ENCODE measurements at regions of chr11 and their contacts with region 1.

Region 1: GRCh38 chr11:2532704-2533586 is 88.1 kb downstream of the KCNQ1 start:
- DNase-seq: peak; percentile 97
- ATAC-seq: peak; percentile 84
- H3K4me3 Mint-ChIP-seq: peak overlapping the region; percentile 55
- H3K27ac Mint-ChIP-seq: no peak overlapping the region
- H3K4me1 Mint-ChIP-seq: peaks cover 19% of the 10 kb centered on the region
- H3K27me3 Mint-ChIP-seq: no peaks in the 10 kb centered on the region
- CTCF ChIP-seq: peak; percentile 96

Region 2: DNA sequence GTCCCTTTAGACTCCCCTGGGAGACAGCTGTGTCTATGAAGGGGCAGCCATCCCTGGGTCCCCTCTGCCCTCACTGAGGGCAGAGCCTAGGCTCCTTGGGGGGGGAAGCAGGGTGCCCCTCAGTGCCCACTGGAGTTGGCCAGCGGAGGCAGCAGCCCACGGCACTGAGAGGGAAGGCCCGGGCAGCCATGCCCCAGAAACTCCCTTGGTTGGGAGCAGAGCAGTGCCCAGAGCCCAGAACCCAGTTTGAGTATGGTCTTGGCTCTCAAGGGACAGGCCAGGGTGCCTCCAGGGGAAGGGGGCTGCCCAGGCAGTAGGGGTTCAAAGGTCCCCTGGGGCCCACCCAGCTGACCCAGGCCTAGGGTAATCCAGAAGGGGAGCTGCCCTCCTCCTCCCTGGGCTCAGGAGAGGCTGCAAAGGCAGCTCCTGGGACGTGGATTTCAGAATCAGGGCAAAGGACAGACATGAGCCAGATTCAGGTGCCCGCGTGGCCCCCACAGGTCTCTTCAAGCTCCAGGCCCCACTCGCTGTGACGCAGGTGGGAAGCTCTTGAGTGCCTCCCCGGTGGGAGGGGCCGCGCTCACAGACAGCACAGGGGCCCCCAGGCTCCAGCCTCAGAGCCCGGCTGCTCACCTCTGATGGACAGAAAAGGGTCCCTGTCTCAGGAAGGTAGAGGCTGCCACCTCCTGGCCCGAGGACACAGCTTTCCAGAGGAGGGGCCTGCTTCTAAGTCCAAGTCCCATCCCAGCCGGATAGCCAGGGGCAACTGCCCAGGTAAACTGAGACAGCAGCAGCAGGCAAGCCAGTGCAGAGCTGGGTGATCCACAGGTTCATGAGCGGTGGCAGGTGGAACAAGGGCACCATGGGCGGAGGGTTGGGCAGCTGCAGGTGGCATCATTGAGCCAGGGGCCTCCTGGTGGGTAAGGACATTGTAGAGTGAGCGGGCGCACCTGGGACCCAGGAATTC is 233.9 kb before region 1 on chr11:
- CTCF ChIA-PET with region 1: interaction called, 36 read pairs
- POLR2A ChIA-PET with region 1: no interaction called
- intact Hi-C with region 1: no loop called
- DNase-seq: peak; percentile 74
- ATAC-seq: peak; percentile 27
- H3K4me3 Mint-ChIP-seq: peak overlapping the region; percentile 35
- H3K27ac Mint-ChIP-seq: peak overlapping the region; percentile 57
- H3K4me1 Mint-ChIP-seq: peaks cover 56% of the 10 kb centered on the region
- H3K27me3 Mint-ChIP-seq: no peaks in the 10 kb centered on the region
- CTCF ChIP-seq: peak; percentile 59

Region 3: DNA sequence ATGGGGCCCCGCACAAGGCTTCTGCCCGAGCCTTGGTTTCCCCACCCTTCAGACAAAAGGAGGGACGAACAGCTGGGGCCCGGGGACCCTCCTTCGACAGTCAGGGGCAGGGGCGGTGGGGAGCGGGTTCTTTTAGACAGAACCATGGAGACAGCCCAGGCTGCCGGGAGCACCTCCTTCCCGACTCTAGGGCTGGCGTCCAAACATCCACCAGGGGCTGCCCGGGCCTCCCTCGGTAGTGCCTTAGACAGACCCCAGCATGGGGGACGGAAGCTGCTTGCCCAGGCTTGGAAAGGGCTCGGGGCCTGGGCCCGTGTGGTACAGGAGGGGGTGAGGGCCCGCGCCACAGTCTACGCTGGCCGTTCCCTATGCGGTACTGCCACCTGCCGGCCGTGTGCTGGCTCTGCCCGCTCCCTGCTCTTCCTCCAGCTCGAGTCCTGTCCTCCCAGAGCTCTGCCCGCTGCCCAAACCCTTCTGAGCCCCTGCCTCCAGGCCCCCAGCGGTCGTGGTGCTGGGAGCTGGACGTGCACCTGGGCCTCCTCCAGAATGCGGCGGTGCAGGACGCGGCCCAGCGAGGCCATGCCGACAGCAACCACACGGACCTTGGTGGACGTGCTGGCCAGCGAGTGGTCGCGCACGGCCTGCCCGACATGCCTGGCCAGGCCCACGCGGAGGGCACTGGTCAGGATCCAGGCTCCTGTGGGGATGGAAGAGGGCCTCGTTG is 112.3 kb before region 1 on chr11:
- CTCF ChIA-PET with region 1: interaction called, 182 read pairs
- POLR2A ChIA-PET with region 1: no interaction called
- intact Hi-C with region 1: no loop called
- DNase-seq: peak; percentile 77
- ATAC-seq: peak; percentile 98
- H3K4me3 Mint-ChIP-seq: no peak overlapping the region
- H3K27ac Mint-ChIP-seq: no peak overlapping the region
- H3K4me1 Mint-ChIP-seq: peaks cover 2% of the 10 kb centered on the region
- H3K27me3 Mint-ChIP-seq: no peaks in the 10 kb centered on the region
- CTCF ChIP-seq: peak; percentile 95

Region 4: GRCh38 chr11:2507945-2508749 is 24.8 kb before region 1 on chr11:
- CTCF ChIA-PET with region 1: interaction called, 11 read pairs
- POLR2A ChIA-PET with region 1: no interaction called
- intact Hi-C with region 1: no loop called
- DNase-seq: no peak
- ATAC-seq: no peak
- H3K4me3 Mint-ChIP-seq: no peak overlapping the region
- H3K27ac Mint-ChIP-seq: no peak overlapping the region
- H3K4me1 Mint-ChIP-seq: peaks cover 3% of the 10 kb centered on the region
- H3K27me3 Mint-ChIP-seq: no peaks in the 10 kb centered on the region
- CTCF ChIP-seq: no peak

Region 5: GRCh38 chr11:2590965-2591754 is 58.2 kb after region 1 on chr11:
- CTCF ChIA-PET with region 1: no interaction called
- POLR2A ChIA-PET with region 1: no interaction called
- intact Hi-C with region 1: no loop called
- DNase-seq: no peak
- ATAC-seq: no peak
- H3K4me3 Mint-ChIP-seq: no peak overlapping the region
- H3K27ac Mint-ChIP-seq: no peak overlapping the region
- H3K4me1 Mint-ChIP-seq: no peaks in the 10 kb centered on the region
- H3K27me3 Mint-ChIP-seq: no peaks in the 10 kb centered on the region
- CTCF ChIP-seq: no peak

Region 6: GRCh38 chr11:2625183-2625582 is 92.2 kb after region 1 on chr11:
- CTCF ChIA-PET with region 1: no interaction called
- POLR2A ChIA-PET with region 1: no interaction called
- intact Hi-C with region 1: no loop called
- DNase-seq: no peak
- ATAC-seq: no peak
- H3K4me3 Mint-ChIP-seq: no peak overlapping the region
- H3K27ac Mint-ChIP-seq: no peak overlapping the region
- H3K4me1 Mint-ChIP-seq: peaks cover 6% of the 10 kb centered on the region
- H3K27me3 Mint-ChIP-seq: no peaks in the 10 kb centered on the region
- CTCF ChIP-seq: no peak

Region 7: GRCh38 chr11:2885676-2886081 is 352.7 kb after region 1 on chr11 and contains the start of gene CDKN1C:
- CTCF ChIA-PET with region 1: interaction called, 412 read pairs
- POLR2A ChIA-PET with region 1: interaction called, 26 read pairs
- intact Hi-C with region 1: loop called (anchors 1 kb)
- DNase-seq: peak; percentile 83
- ATAC-seq: peak; percentile 87
- H3K4me3 Mint-ChIP-seq: peak within 1 kb of the TSS; percentile 76
- H3K27ac Mint-ChIP-seq: no peak within 1 kb of the TSS
- H3K4me1 Mint-ChIP-seq: peaks cover 4% of the 10 kb centered on the region
- H3K27me3 Mint-ChIP-seq: peaks cover 5% of the 10 kb centered on the region
- CTCF ChIP-seq: no peak
- total RNA-seq, gene CDKN1C: 1.6 TPM

Region 8: DNA sequence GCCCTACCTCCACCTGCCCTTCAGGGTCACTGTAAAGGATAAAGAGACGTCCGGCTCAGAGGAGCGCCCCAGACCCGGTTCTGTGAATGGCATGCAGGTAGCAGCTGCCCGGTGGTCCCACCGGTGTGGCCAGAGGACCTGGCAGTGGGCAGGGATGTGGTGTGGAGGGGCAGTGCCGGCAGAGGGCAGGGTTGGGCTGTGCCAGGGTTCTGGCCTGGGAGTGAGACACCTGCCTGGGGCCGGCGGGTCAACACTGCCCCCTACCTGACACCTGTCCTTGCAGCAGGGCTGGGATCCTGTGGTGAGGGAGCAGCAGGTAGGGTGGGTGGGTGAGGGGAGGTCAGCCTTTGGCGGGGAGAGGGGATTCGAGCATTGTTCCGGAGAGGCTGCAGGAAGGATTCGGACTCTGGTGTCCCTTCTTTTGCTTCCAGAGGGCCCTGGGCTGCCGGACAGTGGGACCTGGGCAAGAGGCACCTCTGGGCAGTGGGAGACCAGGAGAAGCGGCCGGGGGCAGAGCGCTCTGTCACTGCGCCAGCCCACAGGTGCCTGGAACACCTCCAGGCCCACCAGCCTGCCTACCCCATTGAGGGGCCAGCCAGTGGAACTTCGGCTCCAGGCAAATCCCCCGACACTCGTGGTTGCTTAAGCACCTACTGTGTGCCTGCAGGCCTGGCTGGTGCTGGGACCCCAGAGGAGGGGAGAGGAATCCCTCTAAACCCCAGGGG is 397.9 kb after region 1 on chr11:
- CTCF ChIA-PET with region 1: interaction called, 23 read pairs
- POLR2A ChIA-PET with region 1: no interaction called
- intact Hi-C with region 1: no loop called
- DNase-seq: peak; percentile 68
- ATAC-seq: peak; percentile 17
- H3K4me3 Mint-ChIP-seq: peak overlapping the region; percentile 75
- H3K27ac Mint-ChIP-seq: peak overlapping the region; percentile 47
- H3K4me1 Mint-ChIP-seq: peaks cover 25% of the 10 kb centered on the region
- H3K27me3 Mint-ChIP-seq: peaks cover 25% of the 10 kb centered on the region
- CTCF ChIP-seq: peak; percentile 78

Measured in activated CD8-positive, alpha-beta T cell treated with anti-CD3 and anti-CD28 coated beads for 36 hours (primary cell).